HEK293 (cell line): ENCODE measurements at regions of chr7 and their contacts with region 1.

Region 1: GRCh38 chr7:101688183-101688831 is 59.2 kb upstream of the MYL10 start:
- H3K4me3 ChIP-seq: peak overlapping the region; percentile 9
- H3K27ac ChIP-seq: no peak overlapping the region
- H3K4me1 ChIP-seq: no peaks in the 10 kb centered on the region
- CTCF ChIP-seq: peak; percentile 97

Region 2: GRCh38 chr7:101677797-101678479 is 10.4 kb before region 1 on chr7:
- CTCF ChIA-PET with region 1: no interaction called
- POLR2A ChIA-PET with region 1: no interaction called
- H3K4me3 ChIP-seq: no peak overlapping the region
- H3K27ac ChIP-seq: no peak overlapping the region
- H3K4me1 ChIP-seq: no peaks in the 10 kb centered on the region
- CTCF ChIP-seq: no peak

Region 3: DNA sequence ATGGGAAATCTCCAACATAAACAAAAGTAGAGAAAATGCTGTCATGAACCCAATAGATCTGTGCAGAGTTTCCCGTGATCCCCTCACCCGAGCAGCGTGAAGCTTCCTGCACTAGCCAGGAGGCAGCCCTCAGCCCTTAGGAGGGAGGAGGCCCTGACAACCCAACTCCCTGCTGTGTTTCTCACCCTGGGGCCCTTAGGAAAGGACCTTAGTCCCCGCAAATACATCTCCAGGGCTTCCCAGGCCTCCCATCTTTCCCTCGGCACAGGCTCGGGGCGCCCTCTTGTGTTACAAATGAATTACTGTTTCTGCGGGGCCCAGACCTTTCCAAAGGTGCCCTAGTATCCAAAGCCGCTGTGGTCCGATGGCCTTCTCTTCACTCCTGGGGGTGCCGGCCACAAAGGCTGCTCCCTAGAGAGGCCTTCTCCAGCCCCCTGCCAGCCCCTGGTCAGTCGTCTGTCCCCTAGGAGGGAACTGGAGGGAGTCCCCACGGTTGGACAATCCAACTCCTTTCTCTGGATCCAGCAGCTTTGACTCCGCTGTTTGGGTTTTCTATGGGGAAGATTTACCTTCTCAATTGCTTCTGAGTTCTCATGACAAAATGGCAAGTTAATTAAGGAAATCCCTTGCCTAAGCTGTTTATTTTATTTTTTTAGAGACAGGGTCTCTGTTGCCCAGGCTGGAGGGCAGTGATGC is 548.4 kb after region 1 on chr7:
- CTCF ChIA-PET with region 1: interaction called, 11 read pairs
- POLR2A ChIA-PET with region 1: no interaction called
- H3K4me3 ChIP-seq: no peak overlapping the region
- H3K27ac ChIP-seq: no peak overlapping the region
- H3K4me1 ChIP-seq: no peaks in the 10 kb centered on the region
- CTCF ChIP-seq: peak; percentile 51